Activated T-helper 1 cell treated with anti-CD3 and anti-CD28 coated beads, Interleukin-12 subunit alpha, Interleukin-12 subunit beta, Interleukin-2, Interleukin-4 antibody, amounts not matched to agents 30 ng/mL and 10 ng/mL and 1 ng/mL, durations not matched to agents 14 hours and 24 hours and 36 hours (primary cell): ENCODE measurements at regions of chr19 and their contacts with region 1.

Region 1: DNA sequence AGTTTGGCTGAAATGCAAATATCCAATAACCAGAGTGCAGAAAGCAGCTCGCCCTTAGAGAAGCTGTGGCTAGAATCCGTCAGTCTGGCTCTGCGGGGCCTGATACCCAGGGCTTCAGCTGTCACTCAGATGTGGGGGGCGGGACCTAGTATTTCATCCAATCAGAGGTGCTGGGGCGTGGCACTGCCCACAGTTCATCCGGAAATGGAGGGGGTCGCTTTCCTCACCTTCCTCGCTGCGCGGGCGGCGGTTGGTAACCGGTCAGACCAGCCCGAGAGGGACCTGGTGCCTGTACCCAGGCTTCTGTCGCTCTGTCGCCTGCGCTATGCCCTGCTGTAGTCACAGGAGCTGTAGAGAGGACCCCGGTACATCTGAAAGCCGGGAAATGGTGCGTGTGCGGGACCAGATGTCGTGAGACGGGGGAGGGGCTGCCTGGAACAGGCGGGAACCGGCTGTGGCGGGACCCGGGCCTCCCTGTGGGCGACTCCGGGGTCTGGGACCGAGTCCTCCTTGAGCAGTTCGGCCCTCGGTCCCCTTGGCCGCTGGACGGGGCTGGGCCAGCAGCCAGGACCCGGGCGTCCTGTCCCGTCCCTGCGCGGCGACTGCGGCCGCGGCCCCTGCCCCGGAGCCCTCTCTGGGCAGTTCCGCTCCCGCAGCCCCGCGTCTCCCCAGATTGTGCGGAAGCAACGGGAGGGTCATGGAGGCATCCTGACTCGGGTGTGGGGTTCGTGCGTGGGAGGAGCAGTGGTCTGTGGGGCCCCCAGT is at the start of gene ZNF700:
- DNase-seq: peak; percentile 89
- H3K4me3 Mint-ChIP-seq: peak within 1 kb of the TSS; percentile 96
- H3K27ac Mint-ChIP-seq: peak within 1 kb of the TSS; percentile 98
- H3K4me1 Mint-ChIP-seq: peaks cover 33% of the 10 kb centered on the region
- H3K27me3 Mint-ChIP-seq: no peaks in the 10 kb centered on the region
- total RNA-seq, gene ZNF700: 11.9 and 12.2 TPM in 2 replicates

Region 2: GRCh38 chr19:11418549-11419506 is 506.2 kb before region 1 on chr19 and contains the start of gene RGL3:
- intact Hi-C with region 1: no loop called
- DNase-seq: no peak
- H3K4me3 Mint-ChIP-seq: no peak within 1 kb of the TSS
- H3K27ac Mint-ChIP-seq: no peak within 1 kb of the TSS
- H3K4me1 Mint-ChIP-seq: peaks cover 31% of the 10 kb centered on the region
- H3K27me3 Mint-ChIP-seq: peaks cover 62% of the 10 kb centered on the region
- total RNA-seq, gene RGL3: not detected in 2 replicates

Region 3: DNA sequence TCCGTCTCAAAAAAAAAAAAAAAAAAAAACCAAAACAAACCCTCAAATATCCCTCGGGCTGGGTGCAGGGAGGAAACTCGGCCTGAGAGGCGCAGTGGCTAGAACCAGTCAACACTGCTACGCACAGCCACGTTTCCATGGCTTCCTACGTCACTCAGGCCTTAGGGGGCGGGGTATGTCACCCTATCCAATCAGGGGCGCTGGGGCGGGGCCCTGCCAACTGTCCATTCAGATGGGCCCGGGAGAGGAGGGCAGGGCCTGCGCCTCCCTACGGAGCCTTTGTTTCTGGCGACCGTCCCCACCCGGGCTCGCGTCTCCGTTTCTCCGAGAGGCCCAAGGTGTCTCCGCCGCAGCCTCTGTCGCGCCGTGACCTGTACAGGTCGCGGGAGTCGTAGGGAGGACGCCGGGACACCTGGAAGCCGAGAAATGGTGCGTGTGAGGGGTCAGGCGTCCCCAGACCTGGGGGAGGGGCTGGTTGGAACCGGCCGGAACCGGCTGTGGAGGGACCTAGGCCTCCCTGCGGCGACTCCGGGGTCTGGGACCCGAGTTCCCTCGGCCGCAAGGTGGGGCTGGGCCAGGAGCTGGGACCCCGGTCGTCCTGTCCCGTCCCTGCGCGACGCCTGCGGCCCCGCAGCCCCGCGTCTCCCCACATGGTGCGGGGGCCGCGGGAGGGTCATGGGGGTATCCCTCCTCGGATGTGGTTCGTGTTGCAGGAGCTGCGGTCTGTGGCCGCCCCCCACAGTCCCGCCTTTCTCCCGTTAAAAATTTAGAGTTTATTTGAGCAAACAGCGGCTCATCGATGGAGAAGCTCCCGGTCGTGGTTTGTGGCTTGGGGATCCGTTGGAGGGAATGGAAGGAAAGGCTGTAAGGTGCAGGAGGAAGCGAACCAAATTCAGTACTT is 327.6 kb before region 1 on chr19 and contains the start of gene ZNF627:
- intact Hi-C with region 1: loop called (anchors 2 kb)
- DNase-seq: peak; percentile 96
- H3K4me3 Mint-ChIP-seq: peak within 1 kb of the TSS; percentile 93
- H3K27ac Mint-ChIP-seq: peak within 1 kb of the TSS; percentile 89
- H3K4me1 Mint-ChIP-seq: peaks cover 10% of the 10 kb centered on the region
- H3K27me3 Mint-ChIP-seq: no peaks in the 10 kb centered on the region
- total RNA-seq, gene ZNF627: 4.3 and 5.2 TPM in 2 replicates

Region 4: DNA sequence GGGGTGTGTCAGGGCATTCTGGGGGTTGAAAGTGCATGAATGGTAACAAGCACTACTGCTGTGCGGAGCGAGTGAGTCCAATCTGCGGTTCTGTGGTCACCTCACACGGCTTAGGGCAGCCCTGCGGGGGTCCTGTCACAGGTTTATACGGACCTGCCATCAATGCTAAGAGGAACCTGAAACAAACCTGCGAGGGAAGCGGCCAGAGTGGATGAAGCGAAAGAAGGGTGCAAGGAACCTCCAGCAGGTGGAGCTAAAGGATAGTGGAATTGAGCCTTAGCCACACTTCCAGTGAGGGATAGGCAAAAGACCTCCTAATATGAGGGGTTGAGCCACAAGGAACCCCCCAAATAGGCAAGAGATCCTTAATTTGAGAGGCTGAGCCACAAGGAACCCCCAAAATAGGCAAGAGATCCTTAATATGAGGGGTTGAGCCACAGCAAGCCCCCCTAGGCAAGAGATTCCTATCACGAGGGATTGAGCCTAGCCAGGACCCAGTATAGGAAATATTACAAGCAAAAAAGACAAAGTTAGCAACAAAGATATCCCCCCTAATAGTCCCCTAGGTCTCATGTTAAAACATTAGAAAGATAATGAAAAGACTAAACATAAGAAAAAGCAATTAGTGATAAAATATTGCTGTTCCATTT is 43.8 kb before region 1 on chr19:
- intact Hi-C with region 1: loop called (anchors 1 kb)
- DNase-seq: peak; percentile 43
- H3K4me3 Mint-ChIP-seq: no peak overlapping the region
- H3K27ac Mint-ChIP-seq: no peak overlapping the region
- H3K4me1 Mint-ChIP-seq: peaks cover 4% of the 10 kb centered on the region
- H3K27me3 Mint-ChIP-seq: no peaks in the 10 kb centered on the region

Region 5: GRCh38 chr19:11913680-11914079 is 11.4 kb before region 1 on chr19:
- intact Hi-C with region 1: no loop called
- DNase-seq: no peak
- H3K4me3 Mint-ChIP-seq: no peak overlapping the region
- H3K27ac Mint-ChIP-seq: no peak overlapping the region
- H3K4me1 Mint-ChIP-seq: no peaks in the 10 kb centered on the region
- H3K27me3 Mint-ChIP-seq: no peaks in the 10 kb centered on the region

Region 6: GRCh38 chr19:12055783-12056182 is 130.7 kb after region 1 on chr19:
- intact Hi-C with region 1: loop called (anchors 1 kb)
- DNase-seq: no peak
- H3K4me3 Mint-ChIP-seq: no peak overlapping the region
- H3K27ac Mint-ChIP-seq: no peak overlapping the region
- H3K4me1 Mint-ChIP-seq: peaks cover 5% of the 10 kb centered on the region
- H3K27me3 Mint-ChIP-seq: peaks cover 3% of the 10 kb centered on the region

Region 7: DNA sequence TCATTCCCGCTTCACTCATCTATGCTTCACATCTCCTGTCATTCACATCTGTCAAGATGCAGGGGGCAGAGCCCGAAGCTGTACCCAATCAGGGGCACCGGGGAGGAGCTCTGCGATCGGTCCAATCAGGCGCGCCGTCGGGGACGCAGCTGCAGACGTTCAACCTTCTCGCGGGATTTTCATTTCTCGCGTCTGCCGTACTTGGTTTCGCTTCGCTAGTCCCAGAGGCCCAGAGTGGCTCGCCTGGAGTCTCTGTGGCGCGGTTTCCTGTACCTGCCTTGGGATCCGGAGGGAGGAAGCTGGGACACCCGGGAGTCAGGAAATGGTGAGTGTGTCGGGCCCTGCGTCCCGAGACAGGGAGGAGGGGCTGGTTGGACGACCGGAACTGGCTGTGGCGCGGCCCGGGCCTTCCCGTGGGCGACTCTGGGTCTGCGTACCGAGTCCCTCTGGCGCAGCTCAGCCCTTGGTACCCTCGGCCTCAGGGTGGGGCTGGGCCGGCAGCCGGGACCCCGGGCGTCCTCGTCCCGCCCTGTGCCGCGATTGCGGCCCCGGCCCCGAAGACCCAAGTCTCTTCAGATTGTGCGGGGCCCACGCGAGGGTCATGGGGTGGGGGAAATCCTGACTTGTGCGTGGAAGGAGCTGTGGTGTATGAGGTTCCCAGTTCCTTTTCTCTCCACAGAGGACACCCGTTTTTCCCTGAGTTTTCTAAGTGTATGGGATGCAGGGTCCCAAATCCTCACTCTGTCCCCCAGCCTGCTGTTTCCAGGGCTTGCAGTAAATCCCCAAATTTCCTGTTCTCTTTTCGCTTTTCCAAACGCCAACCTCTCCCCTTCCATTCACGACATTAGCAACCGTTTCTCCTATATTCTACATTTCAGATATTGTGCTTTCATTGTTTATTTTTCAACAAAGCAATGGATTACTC is 238.1 kb after region 1 on chr19 and contains the start of gene ZNF136:
- intact Hi-C with region 1: loop called (anchors 2 kb)
- DNase-seq: peak; percentile 90
- H3K4me3 Mint-ChIP-seq: peak within 1 kb of the TSS; percentile 94
- H3K27ac Mint-ChIP-seq: peak within 1 kb of the TSS; percentile 93
- H3K4me1 Mint-ChIP-seq: peaks cover 28% of the 10 kb centered on the region
- H3K27me3 Mint-ChIP-seq: no peaks in the 10 kb centered on the region
- total RNA-seq, gene ZNF136: 10.1 and 10.8 TPM in 2 replicates